ENCODE measurements at regions of chr20 and their contacts with region 1.

Region 1: DNA sequence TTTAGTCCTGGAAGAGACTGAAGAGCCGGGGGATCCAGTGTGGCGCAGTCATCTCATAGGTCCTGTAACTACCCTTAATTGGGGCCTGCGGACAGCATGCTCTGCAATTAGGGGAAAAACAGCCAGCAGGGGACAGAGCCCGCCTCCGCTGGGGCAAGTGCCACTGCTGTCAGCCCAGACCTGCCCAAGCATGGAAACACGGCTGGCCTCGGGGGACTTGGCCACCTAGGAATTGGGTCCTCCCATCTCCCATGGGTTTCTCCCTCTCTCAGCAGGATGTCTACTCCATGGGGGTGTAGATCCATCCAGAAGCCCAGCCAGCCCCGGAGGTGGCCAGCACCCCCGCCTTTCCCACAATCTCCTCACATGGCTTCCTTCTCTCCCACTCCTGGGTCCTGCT is 3.6 kb downstream of the GHRH start:
- DNase-seq: no peak
- H3K4me3 ChIP-seq: no peak overlapping the region
- H3K27ac ChIP-seq: no peak overlapping the region
- H3K4me1 ChIP-seq: peaks cover 3% of the 10 kb centered on the region
- H3K27me3 ChIP-seq: peaks cover 44% of the 10 kb centered on the region
- CTCF ChIP-seq: no peak

Region 2: GRCh38 chr20:37202267-37202943 is 55.6 kb before region 1 on chr20:
- dilution Hi-C with region 1: loop called (anchors 5 kb)
- DNase-seq: peak; percentile 86
- H3K4me3 ChIP-seq: no peak overlapping the region
- H3K27ac ChIP-seq: peak overlapping the region; percentile 59
- H3K4me1 ChIP-seq: peaks cover 16% of the 10 kb centered on the region
- H3K27me3 ChIP-seq: no peaks in the 10 kb centered on the region
- CTCF ChIP-seq: peak; percentile 62 to 91 (median 72)

Measured in keratinocyte (primary cell).